Vagina (tissue), 2 donors: ENCODE measurements at regions of chr2 and their contacts with region 1.

Region 1: DNA sequence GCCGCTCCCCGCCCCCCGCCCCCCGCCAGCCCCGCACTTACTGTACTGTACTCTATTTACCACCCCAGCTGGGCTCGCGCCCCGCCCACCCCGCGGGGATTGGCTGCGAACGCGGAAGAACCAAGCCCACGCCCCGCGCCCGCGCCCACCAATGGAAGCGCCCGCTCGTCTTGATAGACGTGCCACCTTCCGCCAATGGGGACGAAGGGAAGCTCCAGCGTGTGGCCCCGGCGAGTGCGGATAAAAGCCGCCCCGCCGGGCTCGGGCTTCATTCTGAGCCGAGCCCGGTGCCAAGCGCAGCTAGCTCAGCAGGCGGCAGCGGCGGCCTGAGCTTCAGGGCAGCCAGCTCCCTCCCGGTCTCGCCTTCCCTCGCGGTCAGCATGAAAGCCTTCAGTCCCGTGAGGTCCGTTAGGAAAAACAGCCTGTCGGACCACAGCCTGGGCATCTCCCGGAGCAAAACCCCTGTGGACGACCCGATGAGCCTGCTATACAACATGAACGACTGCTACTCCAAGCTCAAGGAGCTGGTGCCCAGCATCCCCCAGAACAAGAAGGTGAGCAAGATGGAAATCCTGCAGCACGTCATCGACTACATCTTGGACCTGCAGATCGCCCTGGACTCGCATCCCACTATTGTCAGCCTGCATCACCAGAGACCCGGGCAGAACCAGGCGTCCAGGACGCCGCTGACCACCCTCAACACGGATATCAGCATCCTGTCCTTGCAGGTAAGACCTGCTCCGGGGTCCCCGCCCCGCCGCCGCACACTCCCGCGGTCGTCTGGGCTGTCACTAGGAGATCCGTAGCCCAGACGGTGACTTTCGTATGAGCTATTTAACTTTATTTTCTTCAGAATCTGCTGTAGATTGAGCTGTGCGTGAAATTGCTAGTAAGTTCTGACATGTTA is at the start of gene ID2:
- DNase-seq: peak; percentile 97 to 99
- H3K4me3 ChIP-seq: peak within 1 kb of the TSS; percentile 66 to 94
- H3K27ac ChIP-seq: peak within 1 kb of the TSS; percentile 95
- H3K4me1 ChIP-seq: peaks cover 50% of the 10 kb centered on the region
- H3K27me3 ChIP-seq: no peaks in the 10 kb centered on the region
- CTCF ChIP-seq: no peak
- POLR2A ChIP-seq: peak; percentile 67 to 99
- total RNA-seq, gene ID2: 378 TPM

Region 2: GRCh38 chr2:7722212-7722910 is 959.7 kb before region 1 on chr2:
- intact Hi-C with region 1: loop called (anchors 5 kb)
- DNase-seq: no peak
- H3K4me3 ChIP-seq: no peak overlapping the region
- H3K27ac ChIP-seq: no peak overlapping the region
- H3K4me1 ChIP-seq: no peaks in the 10 kb centered on the region
- H3K27me3 ChIP-seq: no peaks in the 10 kb centered on the region
- CTCF ChIP-seq: no peak
- POLR2A ChIP-seq: no peak

Region 3: DNA sequence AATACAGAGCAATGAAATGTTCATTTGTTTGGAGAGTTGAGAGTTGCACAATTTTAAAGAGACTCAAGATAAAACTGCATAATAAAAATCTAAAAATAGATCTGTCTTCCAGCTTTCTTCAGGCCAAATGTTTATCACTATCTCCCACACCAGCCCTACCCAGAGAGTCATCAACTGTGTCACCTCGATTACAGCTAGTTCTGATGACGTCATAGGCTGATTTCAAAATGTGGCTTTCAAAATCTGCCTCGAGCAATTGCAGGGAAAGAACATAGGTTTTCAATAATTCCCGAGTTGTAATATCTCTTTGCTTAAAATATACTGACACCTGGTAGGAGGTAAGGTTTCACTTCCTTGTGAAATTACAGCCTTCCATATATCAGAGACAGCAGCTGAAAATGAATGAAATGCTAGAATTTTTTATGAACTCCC is 677.8 kb before region 1 on chr2:
- intact Hi-C with region 1: loop called (anchors 10 kb)
- DNase-seq: peak in 1 of 2 donors; percentile 90
- H3K4me3 ChIP-seq: no peak overlapping the region
- H3K27ac ChIP-seq: peak overlapping the region; percentile 67
- H3K4me1 ChIP-seq: peaks cover 12% of the 10 kb centered on the region
- H3K27me3 ChIP-seq: no peaks in the 10 kb centered on the region
- CTCF ChIP-seq: no peak
- POLR2A ChIP-seq: no peak

Region 4: GRCh38 chr2:8539743-8540551 is 142.1 kb before region 1 on chr2:
- intact Hi-C with region 1: loop called (anchors 5 kb)
- DNase-seq: no peak
- H3K4me3 ChIP-seq: no peak overlapping the region
- H3K27ac ChIP-seq: peak overlapping the region; percentile 51
- H3K4me1 ChIP-seq: peaks cover 70% of the 10 kb centered on the region
- H3K27me3 ChIP-seq: no peaks in the 10 kb centered on the region
- CTCF ChIP-seq: no peak
- POLR2A ChIP-seq: no peak

Region 5: GRCh38 chr2:8612734-8613179 is 69.3 kb before region 1 on chr2:
- intact Hi-C with region 1: loop called (anchors 5 kb)
- DNase-seq: no peak
- H3K4me3 ChIP-seq: no peak overlapping the region
- H3K27ac ChIP-seq: no peak overlapping the region
- H3K4me1 ChIP-seq: no peaks in the 10 kb centered on the region
- H3K27me3 ChIP-seq: no peaks in the 10 kb centered on the region
- CTCF ChIP-seq: no peak
- POLR2A ChIP-seq: no peak